ENCODE measurements at regions of chr6 and their contacts with region 1.

Region 1: DNA sequence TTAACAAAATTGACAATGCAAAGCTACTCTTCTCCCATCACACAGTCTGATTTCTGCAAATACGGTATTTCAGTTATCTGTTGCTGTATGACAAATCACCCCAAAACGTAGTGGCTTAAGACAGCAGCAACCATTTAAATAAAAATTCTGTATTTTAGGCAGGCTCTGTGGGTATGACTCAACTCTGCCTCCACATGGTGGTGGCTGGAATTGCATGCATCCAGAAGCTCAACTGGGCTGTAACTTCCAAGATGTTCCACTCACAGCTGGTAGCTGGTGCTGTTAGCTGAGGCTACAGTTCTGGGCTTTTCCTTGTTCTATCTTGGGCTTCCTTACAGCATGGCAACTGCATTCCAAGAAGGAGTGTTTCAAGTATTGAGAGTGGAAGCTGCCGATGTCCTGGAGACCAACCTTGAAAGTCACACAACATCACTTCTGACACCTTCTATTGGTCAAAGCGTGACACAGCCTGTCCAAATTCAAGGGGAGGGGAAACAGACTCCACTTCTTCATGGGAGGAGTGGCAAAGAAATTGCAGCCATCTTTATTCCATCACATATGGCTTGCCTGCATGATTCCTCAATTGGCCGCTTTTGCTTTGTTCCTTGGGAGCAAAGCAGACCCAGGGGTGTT is 39.7 kb upstream of the TULP1 start:
- DNase-seq: no peak
- H3K4me3 ChIP-seq: no peak overlapping the region
- CTCF ChIP-seq: peak; percentile 57

Region 2: GRCh38 chr6:35534407-35535170 is 17.8 kb before region 1 on chr6:
- CTCF ChIA-PET with region 1: interaction called, 10 read pairs
- POLR2A ChIA-PET with region 1: no interaction called
- DNase-seq: no peak
- H3K4me3 ChIP-seq: no peak overlapping the region
- CTCF ChIP-seq: no peak

Region 3: DNA sequence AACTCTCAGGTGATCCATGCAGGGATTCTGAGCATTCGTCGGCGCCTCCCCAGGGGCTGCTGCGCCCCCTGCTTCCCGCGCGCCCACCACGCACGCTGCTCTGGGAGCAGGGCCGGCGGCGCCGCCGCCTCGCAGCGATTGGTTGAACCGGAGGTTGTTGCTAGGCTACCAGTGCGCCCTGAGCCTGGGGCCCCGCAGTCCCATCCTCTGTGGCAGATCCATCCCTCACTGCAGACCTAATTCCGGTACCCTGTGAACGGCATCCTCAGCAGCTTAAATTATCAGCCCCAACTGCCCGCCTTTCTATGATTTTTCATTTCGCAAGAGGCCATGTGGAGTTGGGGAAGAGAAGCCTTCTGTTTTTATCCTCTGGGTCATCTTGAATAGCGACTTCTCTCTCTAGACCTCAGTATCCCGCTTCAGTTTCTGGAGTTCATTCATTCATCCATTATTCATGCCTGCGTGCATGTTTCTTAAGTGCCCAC is 732.8 kb after region 1 on chr6:
- CTCF ChIA-PET with region 1: no interaction called
- POLR2A ChIA-PET with region 1: no interaction called
- DNase-seq: no peak
- H3K4me3 ChIP-seq: no peak overlapping the region
- CTCF ChIP-seq: no peak